ENCODE measurements at regions of chr2 and their contacts with region 1.

Region 1: DNA sequence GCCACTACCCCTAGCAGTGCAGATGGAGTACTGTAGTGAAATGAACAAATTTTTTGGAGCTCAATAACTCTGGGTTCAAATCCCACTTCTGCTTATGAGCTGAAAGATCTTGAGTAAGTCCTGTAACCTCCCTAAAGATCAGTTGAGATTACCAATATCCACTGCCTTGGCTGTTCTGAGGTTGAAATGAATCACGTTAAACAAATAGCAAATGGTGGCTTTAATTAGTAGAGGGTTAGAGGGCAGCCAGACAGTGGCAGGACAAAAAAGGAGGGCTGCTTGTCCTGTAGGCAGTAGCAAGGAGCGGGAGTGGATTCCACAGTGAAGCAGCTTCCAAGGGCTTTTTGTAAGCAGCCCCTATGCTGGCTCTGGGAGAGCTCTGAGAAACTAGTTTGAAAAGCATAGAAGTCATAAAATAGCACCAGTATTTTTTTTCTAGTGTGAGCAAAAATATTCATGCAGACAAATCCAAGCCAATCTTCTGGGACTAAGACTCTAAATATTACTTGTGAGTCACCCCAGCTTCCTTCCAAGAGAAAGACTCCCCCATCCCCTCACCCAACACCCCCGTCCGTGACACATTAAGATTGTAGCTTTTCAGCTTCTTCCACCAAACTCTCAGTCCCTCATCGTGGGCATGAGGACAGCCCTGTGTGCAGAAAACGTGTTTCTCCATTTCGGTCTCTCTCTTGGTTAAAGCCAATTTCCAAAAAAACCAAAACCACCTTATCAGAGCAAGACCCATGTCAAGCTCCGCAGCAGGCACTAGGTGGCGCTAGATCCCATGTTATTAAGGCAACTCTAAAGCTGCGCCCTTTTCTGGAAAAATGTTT is 123.5 kb upstream of the LGALSL start:
- DNase-seq: peak; percentile 83
- ATAC-seq: peak; percentile 79
- H3K4me3 ChIP-seq: no peak overlapping the region
- H3K27ac ChIP-seq: peak overlapping the region; percentile 61
- H3K4me1 ChIP-seq: peaks cover 40% of the 10 kb centered on the region
- H3K27me3 ChIP-seq: no peaks in the 10 kb centered on the region
- CTCF ChIP-seq: peak; percentile 92

Region 2: GRCh38 chr2:64052468-64053241 is 277.8 kb before region 1 on chr2:
- intact Hi-C with region 1: loop called (anchors 10 kb)
- DNase-seq: no peak
- ATAC-seq: no peak
- H3K4me3 ChIP-seq: no peak overlapping the region
- H3K27ac ChIP-seq: no peak overlapping the region
- H3K4me1 ChIP-seq: peaks cover 6% of the 10 kb centered on the region
- H3K27me3 ChIP-seq: no peaks in the 10 kb centered on the region
- CTCF ChIP-seq: no peak

Region 3: GRCh38 chr2:64491426-64491825 is 160.9 kb after region 1 on chr2:
- intact Hi-C with region 1: loop called (anchors 10 kb)
- DNase-seq: no peak
- ATAC-seq: no peak
- H3K4me3 ChIP-seq: no peak overlapping the region
- H3K27ac ChIP-seq: no peak overlapping the region
- H3K4me1 ChIP-seq: peaks cover 4% of the 10 kb centered on the region
- H3K27me3 ChIP-seq: no peaks in the 10 kb centered on the region
- CTCF ChIP-seq: no peak